IMR-90 (cell line): ENCODE measurements at regions of chr2 and their contacts with region 1.

Region 1: DNA sequence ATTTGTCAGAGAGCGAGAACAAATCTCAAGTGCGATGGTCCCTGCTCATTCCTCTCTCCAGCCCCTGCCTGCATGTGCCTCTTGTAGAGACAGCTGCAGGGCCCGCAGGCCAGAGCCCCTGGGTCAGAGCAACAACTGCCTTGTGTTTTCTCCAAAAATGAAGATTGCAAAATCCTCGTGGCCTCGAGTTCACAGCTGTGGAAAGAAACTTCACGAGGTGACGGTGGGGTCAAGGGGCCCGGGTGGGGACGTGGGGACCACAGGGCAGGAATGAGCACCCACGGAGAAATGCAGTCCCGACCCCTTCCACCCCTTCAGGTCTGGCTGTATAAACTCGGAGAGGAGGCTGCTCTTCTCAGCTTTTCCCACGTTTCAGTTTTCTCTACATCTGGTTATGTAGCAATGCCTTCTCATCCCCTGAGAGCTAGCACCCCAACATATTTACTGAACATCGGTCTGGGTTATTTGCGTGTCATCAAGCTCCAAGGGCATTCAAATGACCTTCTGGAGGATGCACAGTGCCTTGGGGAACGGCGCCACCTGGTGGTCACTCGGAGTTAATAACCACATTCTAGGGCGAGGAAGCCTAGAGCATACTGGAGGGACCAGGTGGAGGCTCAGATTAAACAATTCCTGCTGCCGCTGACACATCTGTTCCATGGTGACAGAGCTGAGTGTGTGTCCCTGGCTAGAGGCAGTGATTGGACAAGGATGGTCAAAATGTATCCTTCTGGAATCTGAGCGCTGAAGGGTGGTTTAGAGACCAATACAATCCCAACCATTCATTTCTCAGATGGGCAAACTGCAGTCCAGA is 91.4 kb upstream of the CYRIA start:
- DNase-seq: peak; percentile 63
- ATAC-seq: peak; percentile 98
- H3K4me3 ChIP-seq: no peak overlapping the region
- H3K27ac ChIP-seq: no peak overlapping the region
- H3K4me1 ChIP-seq: no peaks in the 10 kb centered on the region
- H3K27me3 ChIP-seq: peaks cover 7% of the 10 kb centered on the region; the same call in 1 of the 2 replicates
- CTCF ChIP-seq: peak; percentile 88
- POLR2A ChIP-seq: no peak
- RAD21 ChIP-seq: peak; percentile 97

Region 2: GRCh38 chr2:15939854-15940660 is 817.0 kb before region 1 on chr2 and contains the start of gene MYCN:
- CTCF ChIA-PET with region 1: no interaction called
- POLR2A ChIA-PET with region 1: no interaction called
- dilution Hi-C with region 1: no loop called
- in situ Hi-C with region 1: no loop called
- intact Hi-C with region 1: loop called (anchors 2 kb)
- DNase-seq: no peak
- ATAC-seq: peak; percentile 44
- H3K4me3 ChIP-seq: no peak within 1 kb of the TSS
- H3K27ac ChIP-seq: no peak within 1 kb of the TSS
- H3K4me1 ChIP-seq: no peaks in the 10 kb centered on the region
- H3K27me3 ChIP-seq: peaks cover 33% of the 10 kb centered on the region; the same call in 1 of the 2 replicates
- CTCF ChIP-seq: peak; percentile 45
- POLR2A ChIP-seq: no peak
- RAD21 ChIP-seq: peak; percentile 37; the same call in 1 of the 2 replicates
- total RNA-seq, gene MYCN: not detected in 2 replicates

Region 3: DNA sequence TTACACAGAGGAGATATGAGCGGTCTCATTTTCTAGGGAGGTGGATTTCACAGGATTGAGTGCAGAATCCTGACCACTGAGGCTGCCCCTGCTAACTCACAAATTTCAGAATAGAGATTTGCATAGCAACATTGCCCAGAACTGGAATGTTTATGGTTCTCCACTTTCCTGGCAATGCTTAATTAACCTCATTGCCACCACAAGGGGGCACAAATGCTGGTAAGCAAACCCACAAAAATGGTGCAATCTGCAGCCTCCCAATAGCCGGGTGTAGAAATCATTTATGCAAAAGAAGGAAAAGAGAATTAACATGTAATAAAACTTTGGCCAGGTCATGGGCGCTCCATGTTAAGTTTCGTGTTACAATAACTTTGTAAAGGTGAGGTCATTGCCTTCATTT is 203.8 kb before region 1 on chr2:
- CTCF ChIA-PET with region 1: no interaction called
- POLR2A ChIA-PET with region 1: no interaction called
- dilution Hi-C with region 1: no loop called
- in situ Hi-C with region 1: no loop called
- intact Hi-C with region 1: loop called (anchors 1 kb)
- DNase-seq: peak; percentile 33
- ATAC-seq: peak; percentile 64
- H3K4me3 ChIP-seq: no peak overlapping the region
- H3K27ac ChIP-seq: no peak overlapping the region
- H3K4me1 ChIP-seq: no peaks in the 10 kb centered on the region; the same call in 1 of the 2 replicates
- H3K27me3 ChIP-seq: no peaks in the 10 kb centered on the region
- CTCF ChIP-seq: peak; percentile 47
- POLR2A ChIP-seq: no peak
- RAD21 ChIP-seq: peak; percentile 32; the same call in 1 of the 2 replicates

Region 4: GRCh38 chr2:16617282-16618261 is 139.5 kb before region 1 on chr2:
- CTCF ChIA-PET with region 1: interaction called, 17 read pairs
- POLR2A ChIA-PET with region 1: no interaction called
- dilution Hi-C with region 1: no loop called
- in situ Hi-C with region 1: loop called (anchors 5 kb)
- intact Hi-C with region 1: loop called (anchors 1 kb)
- DNase-seq: peak; percentile 56
- ATAC-seq: peak; percentile 40
- H3K4me3 ChIP-seq: no peak overlapping the region
- H3K27ac ChIP-seq: no peak overlapping the region
- H3K4me1 ChIP-seq: peaks cover 21% of the 10 kb centered on the region
- H3K27me3 ChIP-seq: no peaks in the 10 kb centered on the region
- CTCF ChIP-seq: peak; percentile 67
- POLR2A ChIP-seq: no peak
- RAD21 ChIP-seq: peak; percentile 70

Region 5: GRCh38 chr2:16691261-16691660 is 65.8 kb before region 1 on chr2:
- CTCF ChIA-PET with region 1: no interaction called
- POLR2A ChIA-PET with region 1: no interaction called
- dilution Hi-C with region 1: no loop called
- in situ Hi-C with region 1: no loop called
- intact Hi-C with region 1: no loop called
- DNase-seq: no peak
- ATAC-seq: no peak
- H3K4me3 ChIP-seq: no peak overlapping the region
- H3K27ac ChIP-seq: no peak overlapping the region
- H3K4me1 ChIP-seq: no peaks in the 10 kb centered on the region
- H3K27me3 ChIP-seq: no peaks in the 10 kb centered on the region; the same call in 1 of the 2 replicates
- CTCF ChIP-seq: no peak
- POLR2A ChIP-seq: no peak
- RAD21 ChIP-seq: no peak

Region 6: GRCh38 chr2:17148407-17149145 is 391.5 kb after region 1 on chr2:
- CTCF ChIA-PET with region 1: no interaction called
- POLR2A ChIA-PET with region 1: no interaction called
- dilution Hi-C with region 1: no loop called
- in situ Hi-C with region 1: no loop called
- intact Hi-C with region 1: no loop called
- DNase-seq: no peak
- ATAC-seq: no peak
- H3K4me3 ChIP-seq: no peak overlapping the region
- H3K27ac ChIP-seq: no peak overlapping the region
- H3K4me1 ChIP-seq: no peaks in the 10 kb centered on the region
- H3K27me3 ChIP-seq: no peaks in the 10 kb centered on the region
- CTCF ChIP-seq: no peak
- POLR2A ChIP-seq: no peak
- RAD21 ChIP-seq: no peak

Region 7: DNA sequence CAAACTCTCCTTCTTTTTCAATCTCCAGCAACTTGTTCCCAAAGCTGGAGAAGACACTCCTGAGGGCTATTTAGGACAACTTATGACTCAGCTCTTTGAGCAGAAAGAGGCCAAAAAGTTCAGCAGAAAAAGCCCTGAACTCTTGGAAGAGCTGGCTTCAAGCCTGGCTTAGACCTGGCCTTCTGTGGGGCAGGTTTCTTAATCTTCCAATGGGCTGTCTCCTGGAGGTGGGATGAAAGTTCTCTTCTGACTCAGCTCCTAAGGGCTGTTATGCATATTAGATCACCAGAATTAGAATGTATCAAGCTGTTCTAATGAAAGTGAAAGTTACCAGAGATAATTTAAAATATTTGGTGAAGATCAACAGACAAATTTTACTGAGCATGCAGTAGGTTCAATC is 631.8 kb after region 1 on chr2:
- CTCF ChIA-PET with region 1: no interaction called
- POLR2A ChIA-PET with region 1: no interaction called
- dilution Hi-C with region 1: no loop called
- in situ Hi-C with region 1: no loop called
- intact Hi-C with region 1: no loop called
- DNase-seq: no peak
- ATAC-seq: no peak
- H3K4me3 ChIP-seq: no peak overlapping the region
- H3K27ac ChIP-seq: no peak overlapping the region
- H3K4me1 ChIP-seq: no peaks in the 10 kb centered on the region
- H3K27me3 ChIP-seq: no peaks in the 10 kb centered on the region
- CTCF ChIP-seq: no peak
- POLR2A ChIP-seq: no peak
- RAD21 ChIP-seq: no peak

Region 8: GRCh38 chr2:17658251-17658843 is 901.3 kb after region 1 on chr2:
- CTCF ChIA-PET with region 1: no interaction called
- POLR2A ChIA-PET with region 1: no interaction called
- dilution Hi-C with region 1: no loop called
- in situ Hi-C with region 1: loop called (anchors 25 kb)
- intact Hi-C with region 1: no loop called
- DNase-seq: peak; percentile 76
- ATAC-seq: no peak
- H3K4me3 ChIP-seq: no peak overlapping the region
- H3K27ac ChIP-seq: no peak overlapping the region
- H3K4me1 ChIP-seq: no peaks in the 10 kb centered on the region
- H3K27me3 ChIP-seq: no peaks in the 10 kb centered on the region
- CTCF ChIP-seq: no peak
- POLR2A ChIP-seq: no peak
- RAD21 ChIP-seq: no peak